CD14-positive monocyte (primary cell): ENCODE measurements at regions of chr11 and their contacts with region 1.

Region 1: DNA sequence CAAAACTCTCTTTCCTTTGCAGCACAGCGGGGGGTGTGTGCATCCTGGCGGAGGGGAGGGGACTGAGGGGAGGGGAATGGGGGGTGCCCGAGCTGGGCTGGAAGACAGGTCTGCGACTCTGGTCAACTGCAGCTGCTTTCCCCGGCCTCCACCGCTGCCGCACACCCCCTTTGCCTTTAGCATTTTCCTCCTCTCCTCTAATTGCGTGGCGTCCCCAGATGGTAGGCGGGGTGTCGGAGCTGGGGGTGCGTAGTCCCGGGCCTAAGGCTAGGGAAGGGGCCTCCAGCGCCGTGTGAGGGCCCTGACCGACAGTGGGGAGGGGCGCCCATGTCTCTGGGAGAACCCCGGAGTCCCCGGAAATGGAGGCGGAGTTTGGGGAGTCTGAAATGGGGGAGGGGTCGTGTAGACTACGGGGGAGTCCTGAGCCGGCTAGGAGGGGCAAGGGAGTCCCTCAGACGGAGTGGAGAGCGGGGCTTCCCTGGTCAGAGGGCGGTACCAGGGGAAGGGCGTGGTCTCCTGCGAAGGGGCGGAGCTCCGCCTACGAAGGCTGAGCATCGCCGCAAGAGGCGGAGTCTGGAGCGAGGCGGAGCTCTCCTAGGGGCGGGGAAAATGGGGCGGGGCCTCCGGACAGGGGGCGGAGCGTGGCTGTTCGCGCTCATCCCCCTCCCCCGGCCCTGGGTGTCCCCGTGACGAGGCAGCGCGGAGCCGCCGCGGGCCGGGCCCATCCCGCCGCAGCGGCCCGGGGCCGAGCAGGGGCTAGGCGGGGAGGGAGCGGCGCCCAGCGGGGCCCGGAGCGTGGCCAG is at the start of gene PELI3:
- DNase-seq: peak; percentile 91 to 93 (median 92)
- H3K4me3 ChIP-seq: peak within 1 kb of the TSS; percentile 50 to 86 (median 70)
- H3K4me3 Mint-ChIP-seq: peak within 1 kb of the TSS; percentile 88 to 91
- H3K27ac ChIP-seq: peak within 1 kb of the TSS; percentile 47 to 87
- H3K27ac Mint-ChIP-seq: peak within 1 kb of the TSS; percentile 87 to 97 (median 90)
- H3K4me1 ChIP-seq: peaks cover 24 to 39% of the 10 kb centered on the region in 2 donors
- H3K4me1 Mint-ChIP-seq: peaks cover 40% of the 10 kb centered on the region
- H3K27me3 ChIP-seq: no peaks in the 10 kb centered on the region
- H3K27me3 Mint-ChIP-seq: peaks cover 0 to 5% (median 2%) of the 10 kb centered on the region in 3 donors
- CTCF ChIP-seq: no peak
- polyA plus RNA-seq, gene PELI3: 11.3 to 13.2 (median 12.6) TPM

Region 2: DNA sequence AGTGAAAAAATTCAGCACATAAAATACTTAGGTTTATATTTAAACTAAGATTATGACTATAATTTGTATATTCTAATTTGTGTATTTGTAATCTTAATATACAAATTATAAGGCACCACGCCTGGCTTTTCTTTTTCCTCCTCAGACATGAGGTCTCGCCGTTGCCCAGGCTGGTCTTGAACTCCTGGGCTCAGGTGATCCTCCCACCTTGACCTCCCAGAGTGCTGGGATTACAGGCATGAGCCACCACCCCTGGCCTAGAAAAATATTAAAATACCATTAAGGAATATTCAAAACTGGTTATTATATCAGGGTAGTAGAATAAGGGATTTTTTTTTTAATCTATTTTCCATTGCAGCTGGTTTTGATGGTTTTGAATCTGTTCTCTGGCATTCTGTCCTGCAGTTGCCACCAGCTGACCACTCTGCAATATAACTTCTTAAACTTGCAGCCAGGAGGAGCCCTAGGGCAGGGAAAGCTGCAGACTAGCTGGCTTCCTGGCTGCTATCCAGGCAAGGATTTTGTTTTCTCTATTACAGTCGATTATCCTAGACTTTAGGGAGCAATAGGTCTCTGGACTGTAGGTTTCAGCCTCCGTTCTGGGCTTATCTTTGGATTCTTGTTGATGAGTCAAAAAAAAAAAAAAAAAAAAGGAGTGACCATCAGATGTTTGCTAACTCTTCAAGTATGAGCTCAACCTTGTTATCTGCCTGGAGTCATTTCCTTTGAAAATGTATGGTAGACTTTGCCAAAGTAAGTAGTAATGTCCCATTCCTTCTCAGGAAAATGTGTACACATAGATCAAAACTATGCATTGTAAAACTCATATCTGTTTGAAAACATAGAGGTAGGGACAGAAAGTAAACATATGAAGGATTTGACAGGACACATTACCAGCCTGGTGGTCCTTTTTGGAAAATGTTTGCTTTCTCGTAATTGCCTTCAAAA is 1191.4 kb before region 1 on chr11:
- intact Hi-C with region 1: no loop called
- DNase-seq: peak; percentile 64 to 80 (median 72)
- H3K4me3 ChIP-seq: no peak overlapping the region
- H3K4me3 Mint-ChIP-seq: no peak overlapping the region
- H3K27ac ChIP-seq: no peak overlapping the region
- H3K27ac Mint-ChIP-seq: no peak overlapping the region
- H3K4me1 ChIP-seq: peaks cover 10 to 12% of the 10 kb centered on the region in 2 donors
- H3K4me1 Mint-ChIP-seq: peaks cover 15% of the 10 kb centered on the region
- H3K27me3 ChIP-seq: no peaks in the 10 kb centered on the region
- H3K27me3 Mint-ChIP-seq: peaks cover 0 to 2% (median 1%) of the 10 kb centered on the region in 3 donors
- CTCF ChIP-seq: peak; percentile 93

Region 3: GRCh38 chr11:66438504-66439466 is 27.6 kb before region 1 on chr11 and contains the start of gene MRPL11:
- intact Hi-C with region 1: loop called in 1 of 2 experiments (anchors 2 kb)
- DNase-seq: peak; percentile 82 to 88 (median 85)
- H3K4me3 ChIP-seq: peak within 1 kb of the TSS; percentile 59 to 91 (median 66)
- H3K4me3 Mint-ChIP-seq: peak within 1 kb of the TSS; percentile 85 to 96
- H3K27ac ChIP-seq: peak within 1 kb of the TSS; percentile 6 to 81
- H3K27ac Mint-ChIP-seq: peak within 1 kb of the TSS; percentile 81 to 99 (median 97)
- H3K4me1 ChIP-seq: peaks cover 19 to 23% of the 10 kb centered on the region in 2 donors
- H3K4me1 Mint-ChIP-seq: peaks cover 17% of the 10 kb centered on the region
- H3K27me3 ChIP-seq: no peaks in the 10 kb centered on the region
- H3K27me3 Mint-ChIP-seq: peaks cover 0 to 2% (median 0%) of the 10 kb centered on the region in 3 donors
- CTCF ChIP-seq: peak; percentile 53
- polyA plus RNA-seq, gene MRPL11: 14.7 to 64.6 (median 59.6) TPM

Region 4: DNA sequence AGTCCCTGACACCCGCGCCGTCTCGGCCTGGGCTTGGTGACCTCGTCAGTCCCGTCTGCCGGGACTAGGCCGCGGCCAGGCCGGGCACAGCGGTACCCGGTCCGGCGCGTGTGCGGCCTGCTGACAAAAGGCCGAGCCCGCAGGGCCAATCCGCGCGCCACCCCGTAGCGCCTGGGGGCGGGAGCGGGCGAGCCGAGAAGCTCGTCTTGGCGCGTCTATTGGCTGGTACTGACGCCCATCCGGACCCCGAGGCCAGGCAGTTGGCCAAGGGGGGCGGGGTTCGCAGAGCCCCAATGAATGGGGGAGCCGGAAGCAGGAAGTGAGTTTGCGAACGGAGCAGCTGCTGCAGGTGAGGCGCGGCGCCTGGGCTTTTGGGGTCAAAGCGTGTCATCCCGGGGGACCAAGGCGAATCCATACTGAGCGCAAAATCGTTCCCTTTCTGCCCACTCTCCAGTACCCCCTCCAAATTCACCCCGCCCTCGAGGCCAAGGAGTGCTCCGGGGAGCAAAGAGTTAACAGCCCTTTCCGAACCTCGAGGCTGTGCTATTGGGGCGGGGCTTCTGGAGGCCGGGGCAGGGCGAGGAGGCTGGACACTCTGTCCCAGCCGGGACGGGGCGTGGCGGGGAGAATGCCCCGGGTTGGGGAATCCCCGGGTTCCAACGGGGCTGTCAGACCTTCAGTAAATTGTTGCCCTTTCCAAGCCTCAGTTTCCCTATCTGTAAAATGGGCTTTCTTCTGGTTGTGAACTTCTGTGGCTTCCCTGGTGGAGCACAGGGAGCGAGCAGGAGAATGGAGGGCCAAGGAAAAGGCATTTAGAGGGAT is 13.9 kb after region 1 on chr11 and contains the start of gene DPP3:
- intact Hi-C with region 1: loop called (anchors 2 kb)
- DNase-seq: peak; percentile 96 to 98 (median 96)
- H3K4me3 ChIP-seq: peak within 1 kb of the TSS; percentile 51 to 87 (median 77)
- H3K4me3 Mint-ChIP-seq: peak within 1 kb of the TSS; percentile 85 to 89
- H3K27ac ChIP-seq: peak within 1 kb of the TSS; percentile 82 to 96
- H3K27ac Mint-ChIP-seq: peak within 1 kb of the TSS; percentile 90 to 96 (median 92)
- H3K4me1 ChIP-seq: peaks cover 19 to 24% of the 10 kb centered on the region in 2 donors
- H3K4me1 Mint-ChIP-seq: peaks cover 18% of the 10 kb centered on the region
- H3K27me3 ChIP-seq: no peaks in the 10 kb centered on the region
- H3K27me3 Mint-ChIP-seq: peaks cover 0 to 5% (median 0%) of the 10 kb centered on the region in 3 donors
- CTCF ChIP-seq: no peak
- polyA plus RNA-seq, gene DPP3: 22.4 to 37.0 (median 26.7) TPM

Region 5: GRCh38 chr11:66579017-66579606 is 112.7 kb after region 1 on chr11:
- intact Hi-C with region 1: no loop called
- DNase-seq: peak; percentile 52 to 74 (median 73)
- H3K4me3 ChIP-seq: no peak overlapping the region
- H3K4me3 Mint-ChIP-seq: peak overlapping the region in 1 of 2 donors; percentile 22
- H3K27ac ChIP-seq: no peak overlapping the region
- H3K27ac Mint-ChIP-seq: no peak overlapping the region
- H3K4me1 ChIP-seq: peaks cover 0 to 4% of the 10 kb centered on the region in 2 donors
- H3K4me1 Mint-ChIP-seq: peaks cover 7% of the 10 kb centered on the region
- H3K27me3 ChIP-seq: no peaks in the 10 kb centered on the region
- H3K27me3 Mint-ChIP-seq: peaks cover 10 to 21% (median 15%) of the 10 kb centered on the region in 3 donors
- CTCF ChIP-seq: peak; percentile 75